IMR-90 (cell line): ENCODE measurements at regions of chr7 and their contacts with region 1.

Region 1: GRCh38 chr7:114141415-114141814 is 222.6 kb upstream of the PPP1R3A start:
- DNase-seq: no peak
- ATAC-seq: no peak; the same call in 1 of the 2 replicates
- H3K4me3 ChIP-seq: no peak overlapping the region
- H3K27ac ChIP-seq: no peak overlapping the region
- H3K4me1 ChIP-seq: no peaks in the 10 kb centered on the region
- H3K27me3 ChIP-seq: no peaks in the 10 kb centered on the region
- CTCF ChIP-seq: no peak
- POLR2A ChIP-seq: no peak
- RAD21 ChIP-seq: no peak

Region 2: GRCh38 chr7:114126095-114126494 is 15.3 kb before region 1 on chr7:
- CTCF ChIA-PET with region 1: no interaction called
- POLR2A ChIA-PET with region 1: no interaction called
- dilution Hi-C with region 1: no loop called
- in situ Hi-C with region 1: no loop called
- intact Hi-C with region 1: loop called (anchors 1 kb)
- DNase-seq: no peak
- ATAC-seq: no peak
- H3K4me3 ChIP-seq: no peak overlapping the region
- H3K27ac ChIP-seq: no peak overlapping the region
- H3K4me1 ChIP-seq: no peaks in the 10 kb centered on the region
- H3K27me3 ChIP-seq: no peaks in the 10 kb centered on the region
- CTCF ChIP-seq: no peak
- POLR2A ChIP-seq: no peak
- RAD21 ChIP-seq: no peak